ENCODE measurements at regions of chr18 and their contacts with region 1.

Region 1: GRCh38 chr18:48859311-48860268 is 91.2 kb downstream of the SMAD7 start:
- DNase-seq: no peak
- ATAC-seq: no peak
- H3K4me3 ChIP-seq: no peak overlapping the region
- H3K4me3 Mint-ChIP-seq: no peak overlapping the region
- H3K27ac ChIP-seq: no peak overlapping the region
- H3K27ac Mint-ChIP-seq: no peak overlapping the region
- H3K4me1 ChIP-seq: peaks cover 5% of the 10 kb centered on the region
- H3K4me1 Mint-ChIP-seq: peaks cover 23% of the 10 kb centered on the region
- H3K27me3 ChIP-seq: no peaks in the 10 kb centered on the region
- H3K27me3 Mint-ChIP-seq: no peaks in the 10 kb centered on the region
- CTCF ChIP-seq: no peak

Region 2: DNA sequence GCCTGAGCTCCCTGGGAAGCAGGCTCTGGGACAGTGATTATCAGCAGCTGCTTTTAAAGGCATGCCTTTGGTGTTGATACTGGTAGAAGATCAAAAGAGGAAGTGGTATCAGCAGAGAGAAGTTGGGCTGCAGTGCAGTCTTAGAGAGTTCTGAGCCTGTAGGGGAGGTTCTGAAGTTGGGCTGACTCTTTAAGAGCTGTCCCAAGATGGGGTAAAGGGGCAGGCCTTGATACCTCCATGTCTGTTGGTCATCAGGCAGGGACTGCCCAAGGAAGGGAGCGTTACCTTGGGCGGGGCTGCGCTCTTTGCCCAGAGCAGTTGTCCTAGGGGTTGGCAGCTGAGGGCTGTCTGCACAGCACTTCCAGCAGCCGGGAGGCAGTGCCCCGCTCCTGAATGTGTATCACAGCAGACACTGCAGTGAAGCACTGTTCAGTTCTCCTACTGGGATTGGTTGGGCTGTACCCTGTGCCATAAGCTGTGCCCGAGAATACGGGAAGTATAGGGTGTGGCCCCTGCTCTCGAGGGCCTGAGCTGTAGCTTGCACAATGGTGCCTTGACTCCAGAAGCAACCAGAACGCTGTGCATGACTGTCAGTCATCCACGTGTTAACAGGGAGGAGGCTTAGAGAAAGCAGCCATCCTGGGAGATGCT is 143.8 kb before region 1 on chr18:
- CTCF ChIA-PET with region 1: no interaction called
- POLR2A ChIA-PET with region 1: no interaction called
- intact Hi-C with region 1: no loop called
- DNase-seq: peak in 3 of 14 experiments; percentile 13 to 66 (median 53)
- ATAC-seq: no peak
- H3K4me3 ChIP-seq: no peak overlapping the region
- H3K4me3 Mint-ChIP-seq: no peak overlapping the region
- H3K27ac ChIP-seq: no peak overlapping the region
- H3K27ac Mint-ChIP-seq: no peak overlapping the region
- H3K4me1 ChIP-seq: peaks cover 8% of the 10 kb centered on the region
- H3K4me1 Mint-ChIP-seq: no peaks in the 10 kb centered on the region
- H3K27me3 ChIP-seq: no peaks in the 10 kb centered on the region
- H3K27me3 Mint-ChIP-seq: no peaks in the 10 kb centered on the region
- CTCF ChIP-seq: no peak

Region 3: DNA sequence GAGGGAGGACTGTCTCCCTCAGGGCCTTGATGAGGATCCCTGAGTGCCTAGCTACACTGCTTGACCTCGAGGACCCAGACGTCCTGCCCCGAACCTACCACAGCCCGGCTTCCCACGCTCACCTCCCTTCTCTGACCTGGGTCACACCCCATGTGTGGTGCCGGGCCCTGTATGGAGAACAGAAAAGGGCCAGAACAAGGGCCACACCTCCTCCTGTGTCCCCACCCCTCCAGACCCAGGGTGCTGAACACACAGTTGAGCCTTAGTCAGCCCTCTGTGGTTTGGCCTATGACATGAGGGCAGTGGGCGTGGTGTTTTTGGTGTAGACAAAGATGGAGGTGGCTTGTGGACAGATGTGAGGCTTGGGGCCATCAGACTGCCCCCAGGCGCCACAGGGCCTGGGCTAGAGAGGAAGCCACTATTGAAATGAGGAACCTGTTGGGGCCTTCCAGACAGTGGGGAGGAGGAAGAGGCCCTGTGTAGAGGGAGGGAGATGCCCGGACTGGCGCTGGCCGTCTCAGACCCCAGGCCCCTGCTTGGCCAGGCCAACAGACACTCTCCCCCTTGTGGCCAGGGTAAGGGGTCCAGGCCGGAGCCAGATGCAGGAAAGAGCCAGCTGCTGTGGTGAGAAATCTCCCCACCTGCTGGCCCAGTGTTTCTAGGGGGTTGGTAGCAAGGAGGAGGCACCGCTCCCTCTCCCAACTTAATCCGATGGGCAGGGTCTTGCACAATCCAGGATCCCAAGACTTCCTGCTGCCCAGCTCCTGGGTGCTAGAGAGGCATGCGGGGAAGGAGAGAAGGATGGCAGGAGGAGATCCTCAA is 37.3 kb after region 1 on chr18:
- CTCF ChIA-PET with region 1: no interaction called
- POLR2A ChIA-PET with region 1: no interaction called
- intact Hi-C with region 1: loop called in 1 of 2 experiments (anchors 5 kb)
- DNase-seq: peak in 3 of 14 experiments; percentile 42 to 80 (median 70)
- ATAC-seq: peak; percentile 43
- H3K4me3 ChIP-seq: no peak overlapping the region
- H3K4me3 Mint-ChIP-seq: no peak overlapping the region
- H3K27ac ChIP-seq: no peak overlapping the region
- H3K27ac Mint-ChIP-seq: no peak overlapping the region
- H3K4me1 ChIP-seq: peaks cover 7% of the 10 kb centered on the region
- H3K4me1 Mint-ChIP-seq: peaks cover 13% of the 10 kb centered on the region
- H3K27me3 ChIP-seq: no peaks in the 10 kb centered on the region
- H3K27me3 Mint-ChIP-seq: no peaks in the 10 kb centered on the region
- CTCF ChIP-seq: no peak